ENCODE measurements at regions of chr5 and their contacts with region 1.

Region 1: DNA sequence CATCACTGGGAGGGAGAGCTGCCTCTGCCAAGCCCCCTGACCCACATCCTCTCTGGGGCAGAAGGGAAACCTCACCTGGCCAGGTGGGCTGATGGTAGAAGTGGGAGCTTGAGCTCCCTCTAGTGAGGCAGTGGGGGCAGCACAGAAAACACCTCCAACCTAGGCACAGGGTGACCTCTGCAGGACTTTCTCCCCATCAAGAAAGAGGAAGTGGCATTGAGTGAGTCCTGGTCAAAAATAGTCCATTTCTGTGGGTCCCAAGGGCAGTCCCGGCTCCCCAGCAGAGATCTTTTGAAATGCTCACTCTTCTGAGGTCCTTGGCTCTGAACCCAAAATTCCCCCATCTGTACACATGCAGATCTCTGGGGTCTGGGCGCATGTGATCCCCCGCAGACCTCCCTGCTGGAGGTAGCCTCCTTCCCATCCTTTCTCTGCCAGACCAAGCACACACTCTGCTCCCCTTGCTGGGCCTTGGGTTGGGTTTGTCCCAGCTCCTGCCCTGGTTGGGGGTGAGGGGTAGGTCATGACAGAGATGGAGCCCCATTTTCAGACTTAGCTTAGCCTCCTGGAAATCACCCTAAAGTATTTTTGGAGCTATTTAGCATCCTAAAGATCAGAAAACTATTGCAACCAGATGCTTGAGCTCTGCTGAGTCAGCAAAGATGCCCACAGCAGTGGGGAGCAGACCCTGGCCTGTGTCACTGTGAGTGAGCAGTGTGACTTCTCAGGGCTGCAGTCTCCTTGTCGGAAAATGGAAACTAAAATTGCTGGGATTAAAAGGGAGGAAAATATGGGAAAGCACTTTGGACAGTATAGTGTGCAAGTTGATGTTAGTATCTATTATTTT is 41.6 kb upstream of the LCP2 start:
- DNase-seq: peak; percentile 74
- H3K4me3 Mint-ChIP-seq: no peak overlapping the region
- H3K27ac Mint-ChIP-seq: no peak overlapping the region
- H3K4me1 Mint-ChIP-seq: peaks cover 33% of the 10 kb centered on the region
- H3K27me3 Mint-ChIP-seq: no peaks in the 10 kb centered on the region

Region 2: DNA sequence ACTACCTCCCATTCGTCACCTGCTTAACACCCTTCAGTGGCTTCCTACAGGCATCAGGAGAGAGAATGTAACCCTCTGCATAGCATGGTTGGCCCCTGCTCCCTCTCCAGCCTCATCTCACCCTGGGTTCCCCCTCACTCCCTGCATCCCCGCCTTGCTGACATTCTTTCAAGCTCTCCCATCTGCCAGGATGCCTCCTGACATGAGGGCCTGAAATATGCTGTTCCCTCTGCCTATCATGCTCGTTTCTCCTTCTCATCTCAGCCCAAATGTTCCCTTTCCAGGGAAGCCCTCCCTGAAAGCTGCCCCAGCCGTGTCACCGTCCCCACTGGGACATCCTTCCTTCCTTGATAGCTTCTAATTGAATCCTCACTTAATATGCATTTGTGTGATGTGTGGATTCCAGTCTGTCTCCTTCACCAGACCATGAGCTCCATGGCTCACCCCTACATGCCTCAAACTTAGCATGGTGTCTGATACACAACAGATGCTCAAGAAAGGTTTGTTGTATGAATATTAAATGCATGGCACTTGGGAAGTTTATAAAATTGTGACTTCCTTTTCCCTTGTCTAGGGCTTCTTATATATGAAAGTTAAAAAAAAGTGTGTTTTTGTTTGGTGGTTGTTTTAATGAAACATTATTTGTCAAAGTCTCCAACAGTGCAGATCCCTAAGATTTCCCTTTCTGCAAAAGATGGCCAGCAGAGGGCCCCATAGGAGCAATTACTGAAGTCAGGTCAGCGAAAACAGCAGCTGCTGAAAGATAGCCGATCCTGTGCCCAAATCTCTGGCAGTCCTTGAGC is 113.6 kb before region 1 on chr5:
- CTCF ChIA-PET with region 1: interaction called, 141 read pairs
- POLR2A ChIA-PET with region 1: interaction called, 11 read pairs
- DNase-seq: peak; percentile 80
- H3K4me3 Mint-ChIP-seq: no peak overlapping the region
- H3K27ac Mint-ChIP-seq: no peak overlapping the region
- H3K4me1 Mint-ChIP-seq: peaks cover 3% of the 10 kb centered on the region
- H3K27me3 Mint-ChIP-seq: no peaks in the 10 kb centered on the region

Region 3: GRCh38 chr5:170262061-170263045 is 76.8 kb before region 1 on chr5:
- CTCF ChIA-PET with region 1: interaction called, 129 read pairs
- POLR2A ChIA-PET with region 1: interaction called, 290 read pairs
- DNase-seq: peak; percentile 72
- H3K4me3 Mint-ChIP-seq: peak overlapping the region; percentile 53
- H3K27ac Mint-ChIP-seq: peak overlapping the region; percentile 95
- H3K4me1 Mint-ChIP-seq: peaks cover 84% of the 10 kb centered on the region
- H3K27me3 Mint-ChIP-seq: no peaks in the 10 kb centered on the region

Region 4: GRCh38 chr5:170287532-170287931 is 51.6 kb before region 1 on chr5:
- CTCF ChIA-PET with region 1: interaction called, 76 read pairs
- POLR2A ChIA-PET with region 1: interaction called, 375 read pairs
- DNase-seq: no peak
- H3K4me3 Mint-ChIP-seq: peak overlapping the region; percentile 0
- H3K27ac Mint-ChIP-seq: peak overlapping the region; percentile 74
- H3K4me1 Mint-ChIP-seq: peaks cover 99% of the 10 kb centered on the region
- H3K27me3 Mint-ChIP-seq: no peaks in the 10 kb centered on the region

Region 5: DNA sequence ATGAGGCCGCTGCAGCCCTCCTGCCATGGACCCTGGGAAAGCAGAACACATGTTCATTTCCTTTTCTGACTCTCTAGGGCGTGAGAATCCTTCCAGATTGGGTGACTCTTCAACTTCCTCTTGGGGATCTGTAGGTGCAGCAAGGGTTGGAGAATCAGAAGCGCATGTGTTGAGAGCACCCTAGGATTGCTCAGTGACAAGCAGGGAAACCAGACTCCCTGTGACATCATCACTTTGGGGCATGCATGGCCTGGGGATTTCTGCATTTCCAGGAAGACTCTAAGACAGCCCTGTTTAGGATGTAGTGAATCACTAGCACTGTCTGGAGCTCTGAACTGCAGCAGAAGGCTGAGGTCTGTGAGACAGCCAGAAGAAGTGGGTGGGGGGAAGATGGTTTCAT is 26.5 kb before region 1 on chr5:
- CTCF ChIA-PET with region 1: interaction called, 14 read pairs
- POLR2A ChIA-PET with region 1: interaction called, 19 read pairs
- DNase-seq: peak; percentile 56
- H3K4me3 Mint-ChIP-seq: peak overlapping the region; percentile 52
- H3K27ac Mint-ChIP-seq: peak overlapping the region; percentile 79
- H3K4me1 Mint-ChIP-seq: peaks cover 30% of the 10 kb centered on the region
- H3K27me3 Mint-ChIP-seq: peaks cover 2% of the 10 kb centered on the region

Measured in activated CD4-positive, alpha-beta memory T cell treated with anti-CD3 and anti-CD28 coated beads, Interleukin-2, amount 10 ng/mL, durations not matched to agents 7 days and 5 days (primary cell).